Posterior cingulate gyrus (tissue), 11 donors: ENCODE measurements at regions of chr14 and their contacts with region 1.

Region 1: GRCh38 chr14:93115069-93115820 is 480 bp downstream of the ITPK1 start:
- DNase-seq: peak; percentile 75 to 98 (median 87)

Region 2: GRCh38 chr14:92951912-92952471 is 163.3 kb before region 1 on chr14:
- intact Hi-C with region 1: loop called (anchors 1 kb)
- DNase-seq: peak; percentile 72 to 98 (median 90)

Region 3: DNA sequence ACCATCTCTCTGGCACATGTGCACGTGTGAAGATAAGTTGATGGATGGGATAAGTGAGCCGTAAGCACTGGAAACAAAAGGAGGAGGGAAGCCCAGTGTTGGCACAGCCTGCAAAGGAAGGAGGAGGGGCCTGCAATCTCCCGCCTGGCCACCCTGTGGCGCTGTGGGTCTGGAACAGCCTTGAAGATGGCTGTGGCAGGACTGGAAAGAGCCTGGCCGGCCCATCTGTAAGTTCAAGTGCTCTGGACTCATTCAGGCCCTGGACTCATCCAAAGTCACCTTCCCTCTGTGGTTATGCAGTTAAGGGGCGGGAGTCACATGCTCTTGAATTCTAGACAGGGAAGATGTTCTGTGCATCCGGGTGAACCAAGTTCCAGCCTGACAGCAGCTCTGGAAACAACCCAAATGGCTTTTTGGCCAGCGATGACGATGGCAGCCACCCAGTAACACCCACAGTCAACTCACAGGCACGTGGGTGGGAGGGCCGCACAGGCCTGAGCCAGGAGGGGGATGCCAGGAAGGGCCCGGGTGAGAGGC is 141.9 kb before region 1 on chr14:
- intact Hi-C with region 1: loop called (anchors 5 kb)
- DNase-seq: peak; percentile 71 to 97 (median 85)

Region 4: GRCh38 chr14:93012951-93013719 is 102.1 kb before region 1 on chr14:
- intact Hi-C with region 1: no loop called
- DNase-seq: no peak

Region 5: DNA sequence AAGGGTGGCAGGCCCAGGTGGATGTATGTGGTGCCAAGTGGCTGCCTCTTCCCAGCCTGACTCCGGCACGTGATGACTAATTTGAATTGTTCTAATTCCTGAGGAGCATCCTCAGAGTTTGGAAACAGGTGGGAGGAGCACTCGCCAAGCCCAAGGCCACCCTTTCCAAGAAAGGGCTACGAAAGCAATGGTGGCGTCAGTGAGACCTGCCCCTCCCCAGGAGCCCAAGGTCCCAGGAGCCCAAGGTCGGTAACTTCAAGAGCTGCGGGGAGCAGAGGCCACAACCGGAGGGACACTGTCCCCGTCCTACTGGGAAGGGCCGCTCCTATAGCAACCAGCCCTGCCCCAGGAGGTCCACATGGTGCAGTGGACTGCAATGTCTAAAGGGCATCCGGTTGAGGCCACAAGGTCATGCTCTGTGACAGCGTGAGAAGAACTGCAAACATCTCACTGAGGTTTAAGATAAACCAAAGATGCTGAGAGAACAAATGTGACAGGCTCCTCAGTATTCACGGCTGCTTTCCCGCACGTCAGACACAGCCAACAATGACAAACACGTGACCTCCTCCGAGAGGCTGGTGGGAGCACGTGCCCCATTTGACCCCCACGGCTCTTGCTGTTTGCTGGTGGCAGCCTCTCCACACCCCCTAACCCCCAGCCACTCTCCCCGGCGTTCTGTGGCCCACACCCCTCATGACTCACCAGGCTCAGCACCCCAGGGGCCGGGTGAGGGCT is 79.2 kb before region 1 on chr14:
- intact Hi-C with region 1: loop called (anchors 5 kb)
- DNase-seq: peak; percentile 79 to 98 (median 90)

Region 6: GRCh38 chr14:93137864-93138263 is 22.6 kb after region 1 on chr14:
- intact Hi-C with region 1: loop called (anchors 2 kb)
- DNase-seq: peak in 1 of 10 donors; percentile 72

Region 7: DNA sequence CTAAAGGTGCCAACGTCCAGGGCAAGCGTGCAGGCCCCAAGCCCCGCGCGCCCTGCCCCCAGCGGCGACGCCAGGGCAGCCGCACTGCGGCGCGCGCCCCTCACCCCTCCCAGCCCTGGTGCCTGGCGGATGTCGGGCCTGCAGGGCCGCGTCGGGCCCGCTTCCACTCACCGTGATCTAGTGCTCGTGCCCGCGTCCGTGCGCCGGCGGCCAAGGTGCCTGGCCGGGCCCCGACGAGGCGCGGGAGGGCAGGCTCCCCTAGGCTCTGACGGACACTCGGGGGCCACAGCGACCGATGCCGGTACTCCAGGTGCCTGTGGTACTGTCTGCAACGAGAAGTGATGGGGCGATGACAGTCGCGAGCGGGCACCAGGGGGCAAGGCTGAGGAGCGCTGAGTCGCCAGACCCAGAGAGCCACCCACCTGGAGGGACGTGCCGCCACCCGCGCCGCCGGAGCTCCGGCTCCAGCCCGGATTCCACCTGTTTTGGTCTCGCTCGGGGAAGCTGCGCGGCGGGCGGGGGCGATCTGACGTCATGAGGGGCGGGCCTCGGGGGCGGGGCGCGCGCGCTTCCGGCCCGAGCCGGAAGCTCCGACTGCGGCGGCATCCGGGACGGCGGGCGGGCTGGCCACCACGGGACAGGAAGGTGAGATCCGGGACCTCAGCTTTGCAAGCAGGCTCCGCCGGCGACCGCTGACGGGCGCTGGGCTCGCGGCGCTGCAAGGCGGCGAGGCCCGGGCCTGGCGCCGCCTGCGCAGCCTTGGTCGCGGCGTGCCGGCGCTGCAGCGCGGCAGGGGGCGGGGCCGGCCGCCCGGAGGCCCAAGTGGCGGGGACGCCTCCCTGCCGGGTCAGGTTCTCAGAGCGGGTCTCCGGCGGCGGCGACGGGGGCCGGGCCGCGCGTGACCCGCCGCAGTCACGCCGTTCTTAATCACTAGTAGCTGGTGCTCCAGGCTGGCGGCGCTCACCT is 69.4 kb after region 1 on chr14 and contains the starts of genes LYSET and MOAP1:
- intact Hi-C with region 1: loop called (anchors 2 kb)
- DNase-seq: peak; percentile 77 to 98 (median 88)